ENCODE measurements at regions of chr7 and their contacts with region 1.

Region 1: GRCh38 chr7:131859147-131859821 is 302.9 kb upstream of the PODXL start:
- H3K4me3 ChIP-seq: no peak overlapping the region
- H3K27ac ChIP-seq: no peak overlapping the region
- H3K4me1 ChIP-seq: no peaks in the 10 kb centered on the region
- CTCF ChIP-seq: peak; percentile 78; the same call in 1 of the 2 replicates

Region 2: DNA sequence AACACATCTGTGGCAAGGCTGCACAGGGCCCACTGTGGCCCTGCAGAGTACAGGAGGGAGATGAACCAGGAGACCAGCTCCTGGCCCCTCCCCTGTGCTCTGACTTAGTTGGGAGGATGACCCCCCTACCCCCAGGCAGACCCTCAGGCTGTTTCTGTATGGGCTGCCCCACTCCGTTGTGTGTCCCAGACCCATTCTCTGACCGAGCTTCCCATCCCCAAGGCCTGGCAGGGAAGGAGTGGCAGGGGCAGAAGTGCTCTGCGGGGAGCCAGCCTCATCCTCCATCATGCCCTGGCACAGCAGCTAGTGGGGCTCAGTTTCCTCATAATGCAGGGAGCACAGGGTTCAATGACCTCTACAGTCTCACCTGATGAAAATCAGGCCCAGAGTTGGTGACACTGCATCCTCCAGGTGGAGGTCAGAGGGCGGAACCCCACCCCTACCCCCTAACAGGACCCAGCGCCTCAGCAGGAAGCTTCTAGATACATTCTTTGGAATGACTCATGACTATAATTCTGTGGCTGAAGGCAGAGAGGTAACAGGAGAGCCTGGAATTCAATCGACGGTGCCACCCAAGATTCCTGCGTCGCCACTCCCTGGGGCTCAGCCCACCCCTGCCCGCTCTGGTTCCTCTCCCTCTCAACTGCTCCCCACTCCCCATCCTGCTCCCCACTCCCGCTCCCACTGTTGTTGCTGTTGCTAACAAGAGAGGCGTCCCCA is 321.1 kb before region 1 on chr7:
- CTCF ChIA-PET with region 1: no interaction called
- POLR2A ChIA-PET with region 1: no interaction called
- H3K4me3 ChIP-seq: no peak overlapping the region
- H3K27ac ChIP-seq: no peak overlapping the region
- H3K4me1 ChIP-seq: no peaks in the 10 kb centered on the region
- CTCF ChIP-seq: no peak

Region 3: GRCh38 chr7:131688738-131689661 is 170.3 kb before region 1 on chr7:
- CTCF ChIA-PET with region 1: interaction called, 32 read pairs
- POLR2A ChIA-PET with region 1: no interaction called
- H3K4me3 ChIP-seq: no peak overlapping the region
- H3K27ac ChIP-seq: no peak overlapping the region
- H3K4me1 ChIP-seq: no peaks in the 10 kb centered on the region
- CTCF ChIP-seq: peak; percentile 94

Region 4: GRCh38 chr7:131843898-131844331 is 15.4 kb before region 1 on chr7:
- CTCF ChIA-PET with region 1: interaction called, 37 read pairs
- POLR2A ChIA-PET with region 1: interaction called, 3 read pairs
- H3K4me3 ChIP-seq: peak overlapping the region; percentile 9; the same call in 1 of the 2 replicates
- H3K27ac ChIP-seq: no peak overlapping the region
- H3K4me1 ChIP-seq: no peaks in the 10 kb centered on the region
- CTCF ChIP-seq: no peak

Region 5: DNA sequence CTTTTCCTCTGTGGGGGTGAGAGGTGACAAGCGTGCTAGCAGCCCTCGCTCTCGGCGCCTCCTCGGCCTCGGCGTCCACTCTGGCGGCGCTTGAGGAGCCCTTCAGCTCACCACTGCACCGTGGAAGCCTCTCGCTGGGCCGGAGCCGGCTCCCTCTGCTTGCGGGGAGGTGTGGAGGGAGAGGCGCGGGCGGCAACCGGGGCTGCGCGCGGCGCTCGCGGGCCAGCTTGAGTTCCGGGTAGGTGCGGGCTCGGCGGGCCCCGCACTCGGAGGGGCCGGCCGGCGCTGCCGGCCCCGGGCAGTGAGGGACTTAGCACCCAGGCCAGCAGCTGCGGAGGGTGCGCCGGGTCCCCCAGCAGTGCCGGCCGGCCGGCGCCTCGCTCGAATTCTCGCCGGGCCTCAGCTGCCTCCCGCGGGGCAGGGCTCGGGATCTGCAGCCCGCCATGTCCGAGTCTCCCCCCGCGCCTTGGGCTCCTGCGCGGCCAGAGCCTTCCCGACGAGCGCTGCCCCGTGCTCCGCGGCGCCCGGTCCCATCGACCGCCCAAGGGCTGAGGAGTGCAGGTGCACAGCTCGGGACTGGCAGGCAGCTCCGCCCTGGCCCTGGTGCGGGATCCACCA is 50.0 kb after region 1 on chr7:
- CTCF ChIA-PET with region 1: interaction called, 10 read pairs
- POLR2A ChIA-PET with region 1: no interaction called
- H3K4me3 ChIP-seq: peak overlapping the region; percentile 8
- H3K27ac ChIP-seq: no peak overlapping the region; the same call in 1 of the 2 replicates
- H3K4me1 ChIP-seq: no peaks in the 10 kb centered on the region
- CTCF ChIP-seq: no peak

Region 6: DNA sequence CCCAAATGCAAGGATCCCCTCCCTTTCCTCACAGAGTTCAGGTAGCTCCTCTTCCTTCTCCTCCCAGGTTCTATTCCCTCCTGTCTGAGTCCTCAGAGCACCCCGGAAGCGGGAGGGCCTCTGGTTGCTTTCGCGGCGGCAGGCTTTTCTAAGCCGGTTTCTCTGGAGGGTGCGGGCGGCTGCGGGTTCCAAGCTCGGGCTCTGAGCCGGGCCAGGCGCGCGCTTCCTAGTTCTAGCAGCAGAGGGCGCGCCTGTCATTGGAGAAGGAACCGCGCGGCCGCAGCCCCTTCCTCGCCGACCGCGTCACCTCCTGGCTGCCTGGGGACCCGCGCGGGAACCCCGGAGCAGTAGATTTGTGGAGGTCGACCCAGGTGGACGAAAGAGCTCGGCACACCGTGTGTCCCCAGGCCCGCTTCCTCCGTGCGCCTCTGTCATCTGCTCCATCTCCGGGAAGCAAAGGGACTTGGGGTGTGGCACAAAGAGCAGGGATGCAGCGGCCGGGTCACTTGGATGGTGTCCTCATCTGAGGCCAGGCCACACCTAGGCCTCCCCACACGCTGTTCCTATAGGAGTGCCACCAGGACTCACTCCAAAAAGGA is 86.1 kb after region 1 on chr7:
- CTCF ChIA-PET with region 1: interaction called, 13 read pairs
- POLR2A ChIA-PET with region 1: no interaction called
- H3K4me3 ChIP-seq: no peak overlapping the region
- H3K27ac ChIP-seq: no peak overlapping the region
- H3K4me1 ChIP-seq: no peaks in the 10 kb centered on the region
- CTCF ChIP-seq: peak; percentile 84